ENCODE measurements at regions of chr11 and their contacts with region 1.

Region 1: DNA sequence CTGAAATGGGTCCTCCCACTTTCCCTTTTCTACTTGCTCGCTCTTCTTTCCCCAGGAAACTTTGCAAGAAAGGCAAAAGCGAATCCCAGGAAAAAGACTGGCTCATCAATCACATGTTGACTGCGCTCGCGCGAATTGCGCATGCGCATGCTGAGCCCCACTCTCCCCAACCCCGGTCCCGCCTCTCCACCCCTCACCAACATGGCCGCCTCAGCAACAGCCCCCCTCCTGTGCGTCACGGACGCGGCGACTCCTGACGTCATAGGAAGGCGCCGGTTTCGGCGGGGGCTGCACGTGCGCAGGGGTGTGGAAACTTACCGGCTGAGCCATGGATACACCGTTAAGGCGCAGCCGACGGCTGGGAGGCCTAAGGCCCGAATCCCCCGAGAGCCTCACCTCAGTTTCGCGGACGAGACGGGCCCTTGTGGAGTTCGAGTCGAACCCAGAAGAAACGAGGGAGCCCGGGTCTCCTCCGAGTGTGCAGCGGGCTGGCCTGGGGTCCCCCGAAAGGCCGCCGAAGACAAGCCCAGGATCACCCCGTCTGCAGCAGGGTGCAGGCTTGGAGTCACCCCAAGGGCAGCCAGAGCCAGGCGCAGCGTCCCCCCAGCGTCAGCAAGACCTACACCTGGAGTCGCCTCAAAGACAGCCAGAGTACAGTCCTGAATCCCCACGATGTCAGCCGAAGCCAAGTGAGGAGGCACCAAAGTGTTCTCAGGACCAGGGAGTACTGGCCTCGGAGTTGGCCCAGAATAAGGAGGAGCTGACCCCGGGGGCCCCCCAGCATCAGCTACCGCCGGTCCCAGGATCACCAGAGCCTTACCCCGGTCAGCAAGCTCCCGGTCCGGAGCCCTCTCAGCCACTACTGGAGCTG is at the start of gene CCDC86:
- DNase-seq: peak; percentile 98
- ATAC-seq: peak; percentile 95
- H3K4me3 Mint-ChIP-seq: peak within 1 kb of the TSS; percentile 83
- H3K27ac Mint-ChIP-seq: peak within 1 kb of the TSS; percentile 96
- H3K4me1 Mint-ChIP-seq: peaks cover 38% of the 10 kb centered on the region
- H3K27me3 Mint-ChIP-seq: no peaks in the 10 kb centered on the region
- total RNA-seq, gene CCDC86: 52.1 to 75.1 TPM

Region 2: DNA sequence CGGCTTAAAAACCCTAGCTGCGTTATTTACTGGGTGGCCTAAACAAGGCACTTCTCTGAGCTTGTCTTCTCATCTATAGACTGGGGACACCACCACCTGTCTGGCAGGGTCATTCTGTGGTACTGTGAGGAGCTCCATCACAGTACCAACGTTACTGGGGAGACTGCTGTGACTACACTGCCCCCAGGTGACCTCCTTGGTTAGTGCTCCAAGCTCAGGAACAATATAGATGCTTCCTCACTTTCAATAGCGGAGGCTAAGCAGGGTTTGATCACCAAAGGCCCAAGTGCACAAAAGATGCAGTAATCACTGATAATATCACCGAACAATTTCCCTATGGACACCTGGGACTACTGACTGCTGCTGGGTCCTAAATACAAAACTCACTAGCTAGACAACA is 45.5 kb after region 1 on chr11:
- CTCF ChIA-PET with region 1: interaction called, 13 read pairs
- POLR2A ChIA-PET with region 1: interaction called, 4 read pairs
- intact Hi-C with region 1: no loop called
- DNase-seq: peak; percentile 60
- ATAC-seq: peak; percentile 90
- H3K4me3 Mint-ChIP-seq: no peak overlapping the region
- H3K27ac Mint-ChIP-seq: no peak overlapping the region
- H3K4me1 Mint-ChIP-seq: no peaks in the 10 kb centered on the region
- H3K27me3 Mint-ChIP-seq: no peaks in the 10 kb centered on the region

Region 3: DNA sequence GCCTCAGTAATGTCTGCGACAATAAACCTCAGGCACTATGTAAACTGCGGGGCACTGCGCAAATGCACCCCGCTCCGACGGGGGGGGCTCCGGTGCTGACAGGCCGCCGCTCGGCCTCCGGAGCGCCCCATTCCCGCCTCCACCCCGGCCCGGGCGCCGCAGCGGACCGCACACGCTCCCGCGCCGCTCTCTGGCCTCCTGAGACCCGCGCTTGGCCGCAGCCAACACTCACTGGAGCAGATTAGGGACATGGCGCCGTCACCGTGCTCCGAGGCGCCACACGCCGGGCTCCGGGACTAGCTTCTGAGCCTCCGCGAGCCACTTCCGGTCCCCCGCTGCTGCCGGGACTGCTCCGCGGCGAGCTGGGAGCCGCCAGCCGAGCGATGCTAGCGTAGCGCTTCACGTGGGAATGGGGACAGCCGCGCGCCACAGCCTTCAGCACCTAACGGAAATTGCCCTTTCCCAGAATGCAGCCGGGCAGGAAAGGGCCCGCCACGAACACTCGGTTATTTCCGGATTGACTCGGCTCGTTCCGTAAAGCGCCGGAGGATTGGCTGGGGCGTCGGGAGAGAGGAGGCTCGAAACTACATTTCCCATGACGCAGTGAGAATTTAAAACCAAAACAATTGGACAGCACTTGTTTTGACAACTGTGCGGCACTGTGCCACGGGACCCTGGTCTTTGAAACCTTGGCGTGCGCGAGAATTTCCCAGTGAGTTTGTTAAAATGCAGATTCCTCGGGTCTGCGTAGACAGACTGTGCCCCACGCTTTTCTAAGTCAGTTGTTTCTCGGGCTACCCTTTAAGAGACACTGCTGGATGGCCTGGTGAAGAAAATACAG is 64.3 kb after region 1 on chr11 and contains the start of gene PRPF19:
- CTCF ChIA-PET with region 1: no interaction called
- POLR2A ChIA-PET with region 1: interaction called, 5 read pairs
- intact Hi-C with region 1: loop called (anchors 1 kb)
- DNase-seq: peak; percentile 99
- ATAC-seq: peak; percentile 97
- H3K4me3 Mint-ChIP-seq: peak within 1 kb of the TSS; percentile 86
- H3K27ac Mint-ChIP-seq: peak within 1 kb of the TSS; percentile 94
- H3K4me1 Mint-ChIP-seq: peaks cover 41% of the 10 kb centered on the region
- H3K27me3 Mint-ChIP-seq: no peaks in the 10 kb centered on the region
- total RNA-seq, gene PRPF19: 148 to 197 TPM

Region 4: GRCh38 chr11:61141601-61142028 is 299.6 kb after region 1 on chr11:
- CTCF ChIA-PET with region 1: no interaction called
- POLR2A ChIA-PET with region 1: no interaction called
- intact Hi-C with region 1: no loop called
- DNase-seq: no peak
- ATAC-seq: peak; percentile 30
- H3K4me3 Mint-ChIP-seq: no peak overlapping the region
- H3K27ac Mint-ChIP-seq: no peak overlapping the region
- H3K4me1 Mint-ChIP-seq: peaks cover 14% of the 10 kb centered on the region
- H3K27me3 Mint-ChIP-seq: no peaks in the 10 kb centered on the region

Measured in activated CD4-positive, alpha-beta T cell treated with anti-CD3 and anti-CD28 coated beads for 36 hours (primary cell).